ENCODE measurements at regions of chr10 and their contacts with region 1.

Region 1: GRCh38 chr10:23263441-23264164 is 71.5 kb downstream of the PTF1A start:
- DNase-seq: no peak
- ATAC-seq: no peak
- H3K4me3 ChIP-seq: no peak overlapping the region
- H3K27ac ChIP-seq: no peak overlapping the region
- H3K4me1 ChIP-seq: no peaks in the 10 kb centered on the region
- H3K27me3 ChIP-seq: peaks cover 2% of the 10 kb centered on the region; the same call in 1 of the 2 replicates
- CTCF ChIP-seq: no peak

Region 2: GRCh38 chr10:23171223-23171876 is 92.3 kb before region 1 on chr10:
- CTCF ChIA-PET with region 1: no interaction called
- POLR2A ChIA-PET with region 1: no interaction called
- in situ Hi-C with region 1: no loop called
- intact Hi-C with region 1: loop called (anchors 10 kb)
- DNase-seq: no peak
- ATAC-seq: no peak
- H3K4me3 ChIP-seq: no peak overlapping the region
- H3K27ac ChIP-seq: no peak overlapping the region
- H3K4me1 ChIP-seq: no peaks in the 10 kb centered on the region
- H3K27me3 ChIP-seq: no peaks in the 10 kb centered on the region; the same call in 1 of the 2 replicates
- CTCF ChIP-seq: no peak

Measured in Panc1 (cell line).